ENCODE measurements at regions of chr12 and their contacts with region 1.

Region 1: DNA sequence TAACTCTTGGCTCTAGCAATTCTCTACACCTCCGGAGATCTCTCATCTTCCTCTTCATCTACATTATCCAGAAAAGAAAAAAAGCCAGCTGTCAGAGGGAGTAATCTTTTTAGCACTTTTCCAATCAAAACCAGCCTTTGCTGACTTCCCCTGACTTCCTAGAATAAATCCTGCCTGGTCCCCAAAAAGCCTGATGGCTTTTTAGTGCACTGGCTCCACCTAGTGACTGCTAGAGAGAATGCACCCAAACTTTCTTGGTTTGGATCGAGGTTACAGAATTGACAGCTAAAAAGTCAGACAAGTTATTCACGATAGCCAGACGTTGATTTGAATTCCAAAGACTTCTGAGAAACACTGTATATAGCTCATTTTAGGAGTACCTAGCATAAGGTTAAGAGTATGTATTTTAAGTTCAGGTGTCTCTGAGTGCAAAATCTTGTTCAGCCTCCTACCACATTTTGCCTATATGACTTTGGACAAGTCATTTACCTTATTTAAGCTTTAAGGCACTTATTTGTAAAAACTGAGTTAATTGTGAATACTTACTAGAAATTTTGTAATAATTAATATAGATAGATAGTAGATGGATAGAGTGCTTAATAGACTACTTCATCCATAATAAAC is 185.7 kb upstream of the GRIN2B start:
- DNase-seq: peak; percentile 41
- ATAC-seq: peak; percentile 93
- H3K4me3 ChIP-seq: no peak overlapping the region
- H3K27ac ChIP-seq: no peak overlapping the region
- H3K4me1 ChIP-seq: no peaks in the 10 kb centered on the region
- H3K27me3 ChIP-seq: no peaks in the 10 kb centered on the region
- CTCF ChIP-seq: peak; percentile 95
- POLR2A ChIP-seq: no peak
- RAD21 ChIP-seq: peak; percentile 89

Region 2: GRCh38 chr12:12999959-13000615 is 1167.0 kb before region 1 on chr12 and contains the start of gene HEBP1:
- CTCF ChIA-PET with region 1: no interaction called
- POLR2A ChIA-PET with region 1: no interaction called
- dilution Hi-C with region 1: no loop called
- in situ Hi-C with region 1: no loop called
- intact Hi-C with region 1: loop called (anchors 10 kb)
- DNase-seq: peak; percentile 84
- ATAC-seq: peak; percentile 90
- H3K4me3 ChIP-seq: peak within 1 kb of the TSS; percentile 97
- H3K27ac ChIP-seq: peak within 1 kb of the TSS; percentile 87
- H3K4me1 ChIP-seq: peaks cover 20% of the 10 kb centered on the region
- H3K27me3 ChIP-seq: no peaks in the 10 kb centered on the region
- CTCF ChIP-seq: no peak
- POLR2A ChIP-seq: peak; percentile 75
- RAD21 ChIP-seq: no peak
- total RNA-seq, gene HEBP1: 14.7 and 18.8 TPM in 2 replicates

Region 3: DNA sequence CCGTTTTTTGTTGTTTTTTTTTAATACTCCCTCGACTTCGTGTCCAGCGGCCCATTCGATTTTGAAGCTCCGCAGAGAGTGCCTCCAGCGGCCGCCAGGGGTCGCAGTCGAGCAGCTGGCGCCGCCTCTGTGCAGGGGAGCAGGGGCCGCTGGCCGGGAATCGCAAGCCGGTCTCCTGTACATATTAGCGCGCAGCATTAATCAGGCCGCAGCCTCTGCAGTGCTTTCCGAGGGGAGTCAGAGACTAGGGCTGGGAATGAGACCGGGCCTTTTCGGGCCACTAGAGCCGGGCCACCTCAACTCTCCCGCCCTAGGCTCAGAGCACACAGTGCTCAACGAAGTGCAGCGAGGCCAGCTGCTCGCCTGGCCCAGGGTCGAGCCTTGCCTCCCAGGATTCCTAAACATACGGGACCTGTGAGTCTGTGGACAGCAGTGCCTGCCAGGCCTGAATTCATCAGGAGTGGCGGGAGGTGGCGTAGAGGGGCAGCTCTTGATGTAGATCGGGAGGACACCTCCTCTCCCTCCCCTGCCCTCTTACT is 888.8 kb before region 1 on chr12:
- CTCF ChIA-PET with region 1: interaction called, 6 read pairs
- POLR2A ChIA-PET with region 1: no interaction called
- dilution Hi-C with region 1: no loop called
- in situ Hi-C with region 1: loop called (anchors 10 kb)
- intact Hi-C with region 1: loop called (anchors 1 kb)
- DNase-seq: peak; percentile 58
- ATAC-seq: peak; percentile 99
- H3K4me3 ChIP-seq: no peak overlapping the region
- H3K27ac ChIP-seq: no peak overlapping the region
- H3K4me1 ChIP-seq: no peaks in the 10 kb centered on the region
- H3K27me3 ChIP-seq: peaks cover 58% of the 10 kb centered on the region
- CTCF ChIP-seq: peak; percentile 92
- POLR2A ChIP-seq: no peak
- RAD21 ChIP-seq: peak; percentile 74

Region 4: DNA sequence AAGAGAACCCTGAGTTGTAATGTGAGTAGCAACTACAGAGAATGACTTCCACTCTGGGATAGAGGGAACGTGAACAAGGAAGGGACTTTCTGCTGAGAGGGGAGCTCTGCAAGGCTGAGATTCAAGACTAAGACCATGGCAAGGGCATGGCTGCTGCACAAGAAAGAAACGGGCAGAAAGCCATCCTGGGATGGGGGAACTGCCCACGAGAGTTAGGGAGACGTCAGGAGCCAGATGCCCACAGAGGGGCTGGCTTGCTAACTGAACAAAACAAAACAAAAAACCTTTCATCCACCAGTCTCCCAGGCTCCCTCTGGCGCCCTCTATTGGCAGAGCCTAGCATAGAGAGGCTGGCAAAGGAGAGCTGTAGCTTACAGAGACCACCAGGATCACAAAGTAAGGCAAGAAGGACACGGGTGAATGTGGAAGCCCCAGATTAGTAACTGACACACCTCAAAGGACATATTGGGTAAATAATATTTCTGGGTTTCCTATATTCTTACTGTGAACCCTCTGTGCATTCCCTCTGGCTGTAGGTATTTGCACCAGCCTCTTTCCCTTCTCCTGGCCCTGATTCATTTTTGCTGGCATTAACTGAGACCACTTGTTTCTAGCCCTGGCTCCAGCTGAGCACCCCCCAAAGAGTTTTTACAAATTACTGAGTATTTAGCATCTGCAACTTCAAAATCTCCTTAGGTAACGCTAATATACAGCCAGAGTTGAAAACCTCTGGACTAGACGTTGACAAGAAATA is 632.3 kb before region 1 on chr12:
- CTCF ChIA-PET with region 1: no interaction called
- POLR2A ChIA-PET with region 1: no interaction called
- dilution Hi-C with region 1: no loop called
- in situ Hi-C with region 1: no loop called
- intact Hi-C with region 1: loop called (anchors 5 kb)
- DNase-seq: peak; percentile 23
- ATAC-seq: peak; percentile 82
- H3K4me3 ChIP-seq: peak overlapping the region; percentile 25
- H3K27ac ChIP-seq: no peak overlapping the region
- H3K4me1 ChIP-seq: no peaks in the 10 kb centered on the region
- H3K27me3 ChIP-seq: no peaks in the 10 kb centered on the region
- CTCF ChIP-seq: peak; percentile 76
- POLR2A ChIP-seq: no peak
- RAD21 ChIP-seq: peak; percentile 60

Region 5: GRCh38 chr12:13744561-13744960 is 422.6 kb before region 1 on chr12:
- CTCF ChIA-PET with region 1: interaction called, 5 read pairs
- POLR2A ChIA-PET with region 1: no interaction called
- dilution Hi-C with region 1: no loop called
- in situ Hi-C with region 1: loop called (anchors 25 kb)
- intact Hi-C with region 1: loop called (anchors 2 kb)
- DNase-seq: no peak
- ATAC-seq: no peak
- H3K4me3 ChIP-seq: no peak overlapping the region
- H3K27ac ChIP-seq: no peak overlapping the region
- H3K4me1 ChIP-seq: no peaks in the 10 kb centered on the region
- H3K27me3 ChIP-seq: no peaks in the 10 kb centered on the region
- CTCF ChIP-seq: no peak
- POLR2A ChIP-seq: no peak
- RAD21 ChIP-seq: no peak

Region 6: GRCh38 chr12:14058717-14059116 is 108.4 kb before region 1 on chr12:
- CTCF ChIA-PET with region 1: no interaction called
- POLR2A ChIA-PET with region 1: no interaction called
- dilution Hi-C with region 1: no loop called
- in situ Hi-C with region 1: no loop called
- intact Hi-C with region 1: no loop called
- DNase-seq: no peak
- ATAC-seq: no peak
- H3K4me3 ChIP-seq: no peak overlapping the region
- H3K27ac ChIP-seq: no peak overlapping the region
- H3K4me1 ChIP-seq: no peaks in the 10 kb centered on the region
- H3K27me3 ChIP-seq: no peaks in the 10 kb centered on the region
- CTCF ChIP-seq: no peak
- POLR2A ChIP-seq: no peak
- RAD21 ChIP-seq: no peak

Region 7: GRCh38 chr12:14803011-14803829 is 636.1 kb after region 1 on chr12 and contains the starts of genes C12orf60 and WBP11:
- CTCF ChIA-PET with region 1: no interaction called
- POLR2A ChIA-PET with region 1: no interaction called
- dilution Hi-C with region 1: no loop called
- in situ Hi-C with region 1: no loop called
- intact Hi-C with region 1: no loop called
- DNase-seq: peak; percentile 99
- ATAC-seq: peak; percentile 99
- H3K4me3 ChIP-seq: peak within 1 kb of the TSS; percentile 92
- H3K27ac ChIP-seq: peak within 1 kb of the TSS; percentile 82
- H3K4me1 ChIP-seq: no peaks in the 10 kb centered on the region
- H3K27me3 ChIP-seq: no peaks in the 10 kb centered on the region
- CTCF ChIP-seq: no peak
- POLR2A ChIP-seq: peak; percentile 89
- RAD21 ChIP-seq: no peak
- total RNA-seq, gene C12orf60: 1.1 TPM in 2 replicates
- total RNA-seq, gene WBP11: 2.5 and 3.9 TPM in 2 replicates